ENCODE measurements at regions of chr19 and their contacts with region 1.

Region 1: GRCh38 chr19:18281082-18282020 is at the start of gene JUND:
- DNase-seq: peak; percentile 98

Region 2: DNA sequence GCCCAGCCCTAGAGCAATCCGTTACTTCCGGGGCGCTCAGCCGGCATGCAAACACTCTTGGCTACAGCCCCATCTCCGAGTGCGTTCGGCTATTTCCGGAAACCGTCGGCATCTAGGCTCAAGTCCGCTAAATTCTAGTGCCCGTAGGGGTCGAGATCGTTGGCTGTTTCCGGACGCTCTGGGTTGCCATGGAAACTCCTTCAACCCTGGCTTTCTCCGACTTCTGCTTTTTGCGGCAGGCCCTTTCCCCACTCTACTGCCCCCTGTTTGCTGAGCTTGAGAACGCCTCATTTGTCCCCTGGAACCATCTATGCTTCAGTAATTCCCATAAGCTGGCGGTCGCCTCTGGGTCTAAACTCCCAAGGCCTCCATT is 128.9 kb before region 1 on chr19:
- CTCF ChIA-PET with region 1: no interaction called
- POLR2A ChIA-PET with region 1: interaction called, 11 read pairs
- DNase-seq: peak; percentile 98

Region 3: GRCh38 chr19:18269070-18269723 is 12.2 kb before region 1 on chr19:
- CTCF ChIA-PET with region 1: interaction called, 11 read pairs
- POLR2A ChIA-PET with region 1: interaction called, 10 read pairs
- DNase-seq: no peak

Region 4: DNA sequence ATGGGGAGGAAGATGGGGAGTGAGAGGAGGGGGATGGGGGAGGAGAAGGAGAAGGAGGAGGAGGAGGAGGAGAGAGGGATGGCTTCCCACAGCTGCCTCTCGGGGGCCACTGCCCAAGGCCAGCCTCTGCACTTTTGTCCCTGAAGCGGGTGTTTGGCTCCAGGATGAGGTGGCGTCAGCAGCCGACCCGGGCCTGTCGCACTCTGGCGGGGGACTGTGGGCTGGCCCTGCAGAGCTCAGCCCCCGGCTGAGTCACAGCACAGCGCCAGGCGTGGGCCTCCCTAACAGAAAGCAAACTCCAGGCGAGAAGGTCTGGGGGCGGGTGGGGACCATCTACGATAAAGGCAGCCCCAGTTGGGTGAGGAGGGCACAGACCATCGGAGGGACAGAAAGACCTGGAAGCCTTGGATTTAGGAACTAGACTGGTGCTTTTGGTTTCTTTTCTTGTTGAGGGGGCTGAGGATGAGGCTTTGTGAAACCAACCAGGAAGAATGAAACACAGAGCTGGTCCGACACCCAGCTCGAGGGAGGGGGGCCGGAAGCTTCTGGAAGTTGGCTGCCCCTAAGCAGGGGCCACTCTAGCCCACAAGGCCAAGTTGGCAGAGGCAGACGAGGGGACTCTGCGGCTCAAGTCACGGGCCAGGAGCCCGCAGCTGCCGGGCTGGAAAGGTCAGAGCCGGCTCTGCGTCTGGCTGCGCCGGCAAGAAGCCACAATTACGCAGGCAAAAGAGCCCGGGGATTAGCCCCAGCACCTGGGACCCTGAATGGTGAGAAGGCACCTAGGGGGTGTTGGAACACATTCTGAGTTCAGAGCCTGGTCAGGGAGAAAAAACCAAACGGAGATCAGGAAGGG is 23.3 kb after region 1 on chr19:
- CTCF ChIA-PET with region 1: interaction called, 10 read pairs
- POLR2A ChIA-PET with region 1: interaction called, 491 read pairs
- DNase-seq: no peak

Region 5: GRCh38 chr19:18340190-18340989 is 59.0 kb after region 1 on chr19 and contains the start of gene PGPEP1:
- CTCF ChIA-PET with region 1: interaction called, 22 read pairs
- POLR2A ChIA-PET with region 1: interaction called, 17 read pairs
- DNase-seq: peak; percentile 91

Region 6: DNA sequence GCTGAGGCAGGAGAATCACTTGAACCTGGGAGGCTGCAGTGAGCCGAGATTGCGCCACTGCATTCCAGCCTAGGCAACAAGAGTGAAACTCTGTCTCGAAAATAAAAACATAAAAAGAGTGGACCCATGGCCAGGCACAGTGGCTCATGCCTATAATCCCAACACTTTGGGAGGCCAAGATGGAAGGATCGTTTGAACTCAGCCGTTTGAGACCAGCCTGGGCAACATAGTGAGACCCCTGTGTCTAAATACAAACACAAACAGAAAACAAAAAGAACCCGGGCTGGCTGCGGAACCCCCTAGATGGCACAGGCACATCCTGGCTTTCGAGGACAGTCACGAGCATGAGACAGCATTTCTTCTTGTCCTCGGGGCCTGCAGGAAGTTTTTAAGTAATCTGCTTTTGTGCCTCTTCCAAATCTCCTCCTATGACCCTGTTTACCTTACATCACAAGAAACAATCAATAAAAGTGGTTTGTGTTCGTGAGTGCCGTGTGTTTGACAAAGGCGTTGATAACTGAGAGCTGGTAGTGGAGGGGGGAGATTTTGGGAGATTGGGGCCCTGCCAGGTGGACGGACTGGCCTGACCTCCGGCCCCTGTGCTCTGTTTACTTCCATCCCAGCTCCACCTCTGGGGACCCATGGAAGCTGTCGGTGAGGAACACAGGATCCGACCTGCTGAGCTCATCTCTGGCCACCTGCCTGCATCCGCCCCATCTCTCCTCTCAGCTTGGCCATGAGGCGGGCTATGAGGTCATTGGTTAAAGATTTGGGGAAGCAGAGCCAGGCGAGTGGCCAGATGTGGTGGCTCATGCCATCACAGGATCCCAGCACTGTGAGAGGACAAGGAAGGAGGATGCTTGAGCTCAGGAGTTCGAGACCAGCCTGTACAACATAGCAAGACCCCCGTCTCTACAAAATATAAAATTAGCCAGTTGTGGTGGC is 98.7 kb after region 1 on chr19:
- CTCF ChIA-PET with region 1: no interaction called
- POLR2A ChIA-PET with region 1: interaction called, 10 read pairs
- DNase-seq: no peak

Region 7: DNA sequence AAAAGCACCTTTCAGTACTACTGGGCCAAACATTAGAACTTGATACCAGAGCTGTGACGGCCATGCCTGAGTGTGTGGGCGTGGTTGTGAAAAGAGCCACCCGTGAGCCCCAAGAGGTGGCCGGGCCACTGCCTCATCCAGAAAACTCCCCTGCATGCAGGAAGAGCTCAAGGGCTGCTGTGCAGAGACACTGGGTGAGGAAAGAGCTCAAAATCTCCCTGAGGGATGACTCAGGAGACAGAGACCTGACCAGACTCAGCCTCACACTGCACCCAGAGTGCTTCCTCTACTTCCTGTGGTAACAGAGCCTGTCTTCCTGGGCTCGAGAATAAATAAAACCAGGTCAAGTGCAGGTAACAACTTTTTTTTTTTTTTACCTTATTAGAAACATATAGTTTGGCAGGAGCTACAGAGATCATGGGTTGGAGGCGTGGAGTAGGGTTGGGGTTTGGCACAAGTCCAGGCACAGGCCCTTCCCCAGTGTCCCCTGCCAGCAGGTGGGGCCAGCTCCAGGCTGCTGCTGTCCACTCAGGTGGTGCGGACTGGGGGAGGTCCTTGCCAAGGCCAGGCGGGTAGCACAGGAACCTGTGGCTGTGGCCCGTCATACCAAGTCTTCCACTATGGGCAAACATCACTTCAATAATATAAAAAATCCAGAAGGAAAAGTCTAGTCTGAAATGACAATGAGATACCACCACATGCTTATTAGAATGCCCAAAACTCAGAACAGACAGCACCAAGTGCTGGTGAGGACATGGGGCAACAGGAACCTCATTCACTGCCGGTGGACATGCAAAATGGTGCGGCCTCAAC is 215.0 kb after region 1 on chr19:
- CTCF ChIA-PET with region 1: no interaction called
- POLR2A ChIA-PET with region 1: no interaction called
- DNase-seq: no peak